Heart right ventricle (tissue), 16 donors: ENCODE measurements at regions of chr5 and their contacts with region 1.

Region 1: GRCh38 chr5:147361441-147362175 is 126.8 kb downstream of the STK32A start:
- DNase-seq: no peak
- ATAC-seq: no peak
- H3K4me3 ChIP-seq: no peak overlapping the region
- H3K27ac ChIP-seq: no peak overlapping the region
- H3K4me1 ChIP-seq: no peaks in the 10 kb centered on the region
- H3K27me3 ChIP-seq: no peaks in the 10 kb centered on the region
- CTCF ChIP-seq: no peak

Region 2: GRCh38 chr5:147336876-147337275 is 24.7 kb before region 1 on chr5:
- intact Hi-C with region 1: loop called in 1 of 10 experiments (anchors 2 kb)
- DNase-seq: no peak
- ATAC-seq: no peak
- H3K4me3 ChIP-seq: no peak overlapping the region
- H3K27ac ChIP-seq: no peak overlapping the region
- H3K4me1 ChIP-seq: no peaks in the 10 kb centered on the region
- H3K27me3 ChIP-seq: no peaks in the 10 kb centered on the region
- CTCF ChIP-seq: no peak